GM12878 (cell line): ENCODE measurements at regions of chr2 and their contacts with region 1.

Region 1: GRCh38 chr2:80244905-80245584 is 59.5 kb downstream of the LRRTM1 start:
- DNase-seq: no peak
- ATAC-seq: peak; percentile 72
- H3K4me3 ChIP-seq: no peak overlapping the region
- H3K27ac ChIP-seq: no peak overlapping the region
- H3K4me1 ChIP-seq: no peaks in the 10 kb centered on the region
- H3K27me3 ChIP-seq: no peaks in the 10 kb centered on the region
- CTCF ChIP-seq: no peak
- EP300 ChIP-seq: no peak
- POLR2A ChIP-seq: no peak
- RAD21 ChIP-seq: no peak

Region 2: DNA sequence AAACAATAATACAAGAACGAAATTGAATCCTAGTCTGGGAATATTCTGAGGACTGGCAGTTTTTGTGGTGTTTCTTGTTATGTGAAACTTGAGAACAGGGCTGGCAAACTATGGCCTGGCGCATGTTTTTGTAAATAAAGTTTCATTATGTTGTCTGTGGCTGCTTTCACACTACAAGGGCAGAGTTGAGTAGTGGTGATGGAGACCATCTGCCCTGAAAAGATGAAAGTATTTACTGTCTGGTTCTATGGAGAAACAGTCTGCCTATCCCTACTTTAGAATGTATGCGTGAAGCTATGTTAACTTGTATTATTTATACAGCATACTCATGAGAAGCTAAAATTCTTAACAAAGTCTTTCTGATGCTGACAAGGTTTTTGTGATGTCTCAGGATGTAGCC is 292.4 kb before region 1 on chr2:
- CTCF ChIA-PET with region 1: no interaction called
- POLR2A ChIA-PET with region 1: interaction called, 12 read pairs
- RAD21 ChIA-PET with region 1: no interaction called
- SMC1A ChIA-PET with region 1: no interaction called
- in situ Hi-C with region 1: no loop called
- intact Hi-C with region 1: no loop called
- DNase-seq: no peak
- ATAC-seq: no peak
- H3K4me3 ChIP-seq: no peak overlapping the region
- H3K27ac ChIP-seq: no peak overlapping the region
- H3K4me1 ChIP-seq: no peaks in the 10 kb centered on the region
- H3K27me3 ChIP-seq: no peaks in the 10 kb centered on the region
- CTCF ChIP-seq: no peak
- EP300 ChIP-seq: no peak
- POLR2A ChIP-seq: no peak
- RAD21 ChIP-seq: no peak

Region 3: DNA sequence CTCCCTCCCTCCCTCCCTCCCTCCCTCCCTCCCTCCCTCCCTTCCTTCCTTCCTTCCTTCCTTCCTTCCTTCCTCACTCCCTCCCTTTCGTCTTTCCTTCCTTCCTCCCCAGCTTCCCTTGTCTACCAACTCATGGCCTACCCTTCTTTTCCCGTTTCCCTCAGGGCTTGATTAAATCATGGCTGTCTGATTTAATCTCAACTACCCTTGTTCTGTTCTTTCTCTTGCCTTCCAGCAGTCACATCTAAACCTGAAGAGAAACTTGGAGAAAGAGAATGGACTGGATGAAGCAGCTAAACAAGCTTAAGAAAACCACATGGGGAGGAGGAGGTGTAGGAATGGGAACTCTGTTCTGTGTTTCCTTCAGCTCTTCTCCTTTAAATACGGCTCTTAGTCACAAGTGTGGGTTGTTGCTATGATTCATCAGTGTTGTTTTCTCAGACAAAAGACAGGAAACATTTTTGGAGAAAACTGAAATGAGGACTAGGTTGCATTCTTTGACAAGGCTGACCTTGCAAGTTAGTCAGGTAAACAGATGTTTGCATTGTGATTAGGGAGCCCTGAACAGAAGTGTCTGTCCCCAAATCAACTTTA is 118.4 kb before region 1 on chr2:
- CTCF ChIA-PET with region 1: no interaction called
- POLR2A ChIA-PET with region 1: no interaction called
- RAD21 ChIA-PET with region 1: no interaction called
- SMC1A ChIA-PET with region 1: no interaction called
- in situ Hi-C with region 1: no loop called
- intact Hi-C with region 1: no loop called
- DNase-seq: no peak
- ATAC-seq: no peak
- H3K4me3 ChIP-seq: no peak overlapping the region
- H3K27ac ChIP-seq: no peak overlapping the region
- H3K4me1 ChIP-seq: no peaks in the 10 kb centered on the region
- H3K27me3 ChIP-seq: no peaks in the 10 kb centered on the region
- CTCF ChIP-seq: no peak
- EP300 ChIP-seq: no peak
- POLR2A ChIP-seq: no peak
- RAD21 ChIP-seq: no peak